ENCODE measurements at regions of chr16 and their contacts with region 1.

Region 1: GRCh38 chr16:10509534-10510025 is 70.8 kb downstream of the EMP2 start:
- DNase-seq: peak in 9 of 10 donors; percentile 20 to 95 (median 66)

Region 2: GRCh38 chr16:9134739-9135138 is 1374.8 kb before region 1 on chr16:
- intact Hi-C with region 1: loop called (anchors 5 kb)
- DNase-seq: peak in 7 of 10 donors; percentile 26 to 90 (median 45)

Region 3: GRCh38 chr16:10256784-10257641 is 252.6 kb before region 1 on chr16:
- intact Hi-C with region 1: loop called (anchors 1 kb)
- DNase-seq: peak in 4 of 10 donors; percentile 16 to 84 (median 32)

Region 4: GRCh38 chr16:10314811-10315210 is 194.8 kb before region 1 on chr16:
- intact Hi-C with region 1: loop called (anchors 2 kb)
- DNase-seq: no peak

Region 5: DNA sequence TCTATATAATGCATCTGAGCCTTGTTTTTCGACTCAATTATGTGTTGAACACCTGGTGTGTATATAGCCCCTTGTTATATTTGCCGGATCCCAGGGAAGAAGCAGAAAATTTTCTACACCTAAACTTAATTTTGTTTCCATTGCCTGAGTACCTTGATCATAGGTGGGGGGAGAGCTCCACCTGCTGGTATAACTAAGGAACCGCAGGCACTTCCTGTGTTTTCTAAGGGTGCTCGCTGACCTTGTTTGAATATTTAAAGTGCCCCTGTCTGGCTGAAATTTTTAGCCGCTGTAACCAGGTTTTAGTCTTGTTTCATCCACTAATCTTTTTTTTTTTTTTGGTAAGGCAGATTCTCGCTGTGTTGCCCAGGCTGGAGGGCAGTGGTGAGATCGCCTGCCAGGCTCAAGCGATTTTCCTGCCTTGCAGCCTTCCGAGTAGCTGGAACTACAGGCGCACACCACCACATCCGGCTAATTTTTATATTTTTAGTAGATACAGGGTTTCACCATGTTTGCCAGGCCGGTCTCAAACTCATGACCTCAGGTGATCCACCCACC is 227.6 kb after region 1 on chr16:
- intact Hi-C with region 1: loop called (anchors 2 kb)
- DNase-seq: peak in 6 of 10 donors; percentile 22 to 69 (median 59)

Measured in posterior cingulate gyrus (tissue), 11 donors.